IMR-90 (cell line): ENCODE measurements at regions of chr15 and their contacts with region 1.

Region 1: DNA sequence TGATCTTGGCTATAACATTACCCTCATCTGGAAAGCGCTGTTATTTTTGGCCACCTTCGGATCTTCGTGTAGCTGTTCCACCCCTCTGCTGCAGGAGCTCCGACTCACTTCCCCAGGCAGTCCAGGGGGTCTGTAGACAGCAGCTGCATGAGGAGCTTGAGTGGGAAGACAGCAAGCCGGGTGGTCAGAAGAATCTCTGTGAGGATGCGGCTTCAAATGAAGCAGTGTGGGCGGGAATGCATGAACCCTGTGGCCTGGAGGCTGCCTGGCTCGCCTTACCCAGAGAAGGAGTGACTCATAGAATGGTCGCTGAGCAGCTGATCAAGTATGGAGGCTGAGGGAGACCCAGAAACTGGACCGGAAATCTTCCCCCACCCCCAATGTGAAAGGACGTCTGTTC is 45.2 kb upstream of the NR2F2 start:
- DNase-seq: peak; percentile 99
- ATAC-seq: peak; percentile 98
- H3K4me3 ChIP-seq: no peak overlapping the region; the same call in 1 of the 2 replicates
- H3K27ac ChIP-seq: peak overlapping the region; percentile 56
- H3K4me1 ChIP-seq: peaks cover 7% of the 10 kb centered on the region; the same call in 1 of the 2 replicates
- H3K27me3 ChIP-seq: no peaks in the 10 kb centered on the region
- CTCF ChIP-seq: no peak
- POLR2A ChIP-seq: peak; percentile 53; the same call in 1 of the 2 replicates
- RAD21 ChIP-seq: peak; percentile 15; the same call in 1 of the 2 replicates

Region 2: DNA sequence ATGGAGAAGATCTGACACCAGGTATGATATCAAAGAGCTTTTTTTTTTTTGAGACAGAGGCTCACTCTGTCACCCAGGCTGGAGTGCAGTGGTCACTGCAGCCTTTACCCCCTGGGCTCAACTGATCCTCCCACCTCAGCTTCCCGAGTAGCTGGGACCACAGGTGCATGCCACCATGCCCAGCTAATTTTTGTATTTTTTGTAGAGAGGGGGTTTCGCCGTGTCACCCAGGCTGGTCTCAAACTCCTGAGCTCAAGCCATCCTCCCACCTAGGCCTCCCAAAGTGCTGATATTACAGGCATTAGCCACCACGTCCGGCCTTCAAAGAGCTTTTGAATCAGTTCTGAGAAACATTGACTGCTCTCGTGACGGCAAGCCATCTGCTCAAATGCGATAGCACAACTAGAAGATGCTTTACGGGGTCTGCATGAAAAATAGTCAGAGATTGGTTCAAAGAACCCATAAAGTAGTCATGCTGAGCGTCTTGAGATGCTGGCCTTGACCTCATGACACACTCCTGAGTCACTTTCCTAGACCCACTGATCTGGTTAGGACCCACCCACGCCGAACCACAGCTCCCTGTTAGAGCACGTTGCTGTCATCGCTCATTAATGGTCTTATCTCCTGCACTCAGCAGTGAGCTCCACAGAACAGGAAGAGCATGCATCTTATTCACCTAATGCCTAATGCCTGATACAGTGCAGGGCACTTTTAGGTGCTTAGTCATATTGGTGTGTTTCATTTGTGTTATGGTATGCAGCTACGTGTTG is 11.8 kb before region 1 on chr15:
- CTCF ChIA-PET with region 1: interaction called, 4 read pairs
- POLR2A ChIA-PET with region 1: interaction called, 10 read pairs
- dilution Hi-C with region 1: no loop called
- in situ Hi-C with region 1: no loop called
- intact Hi-C with region 1: no loop called
- DNase-seq: peak; percentile 100
- ATAC-seq: peak; percentile 88
- H3K4me3 ChIP-seq: no peak overlapping the region
- H3K27ac ChIP-seq: peak overlapping the region; percentile 20
- H3K4me1 ChIP-seq: peaks cover 19% of the 10 kb centered on the region
- H3K27me3 ChIP-seq: no peaks in the 10 kb centered on the region
- CTCF ChIP-seq: no peak
- POLR2A ChIP-seq: peak; percentile 24; the same call in 1 of the 2 replicates
- RAD21 ChIP-seq: 0 out of 2 replicates have a peak, but pooled peaks have one; percentile 3